Heart left ventricle (tissue), 16 donors: ENCODE measurements at regions of chr19 and their contacts with region 1.

Region 1: DNA sequence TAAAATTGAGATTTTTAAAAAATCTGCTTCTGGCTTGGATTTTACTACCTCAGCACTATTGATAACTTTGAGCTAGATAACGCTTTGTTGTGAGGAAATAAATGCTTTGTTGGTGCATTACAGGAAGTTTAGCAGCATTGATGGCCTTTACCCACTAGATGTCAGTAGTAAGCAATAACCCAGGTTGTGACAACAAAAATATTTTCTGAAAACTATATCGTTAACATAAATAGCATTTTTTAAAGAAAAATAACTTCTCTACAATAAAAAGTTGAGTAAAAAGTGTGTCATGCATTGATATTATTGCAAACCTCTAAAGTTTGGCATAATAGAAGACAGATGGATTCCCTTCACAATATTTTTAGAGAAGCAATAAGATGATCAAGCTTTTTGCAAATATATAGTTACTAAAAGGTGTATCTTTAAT is 1246.5 kb downstream of the UQCRFS1 start:
- DNase-seq: no peak
- ATAC-seq: no peak
- H3K4me3 ChIP-seq: no peak overlapping the region
- H3K27ac ChIP-seq: no peak overlapping the region
- H3K4me1 ChIP-seq: peaks cover 0 to 5% (median 0%) of the 10 kb centered on the region in 12 donors
- H3K27me3 ChIP-seq: peaks cover 0 to 7% (median 0%) of the 10 kb centered on the region in 9 donors
- CTCF ChIP-seq: peak; percentile 41 to 78 (median 53)
- POLR2A ChIP-seq: no peak

Region 2: GRCh38 chr19:28705008-28705407 is 738.6 kb after region 1 on chr19:
- intact Hi-C with region 1: loop called in 5 of 10 experiments (anchors 5 to 10 kb)
- DNase-seq: no peak
- ATAC-seq: no peak
- H3K4me3 ChIP-seq: no peak overlapping the region
- H3K27ac ChIP-seq: no peak overlapping the region
- H3K4me1 ChIP-seq: no peaks in the 10 kb centered on the region
- H3K27me3 ChIP-seq: peaks cover 0 to 5% (median 0%) of the 10 kb centered on the region in 9 donors
- CTCF ChIP-seq: no peak
- POLR2A ChIP-seq: no peak

Region 3: DNA sequence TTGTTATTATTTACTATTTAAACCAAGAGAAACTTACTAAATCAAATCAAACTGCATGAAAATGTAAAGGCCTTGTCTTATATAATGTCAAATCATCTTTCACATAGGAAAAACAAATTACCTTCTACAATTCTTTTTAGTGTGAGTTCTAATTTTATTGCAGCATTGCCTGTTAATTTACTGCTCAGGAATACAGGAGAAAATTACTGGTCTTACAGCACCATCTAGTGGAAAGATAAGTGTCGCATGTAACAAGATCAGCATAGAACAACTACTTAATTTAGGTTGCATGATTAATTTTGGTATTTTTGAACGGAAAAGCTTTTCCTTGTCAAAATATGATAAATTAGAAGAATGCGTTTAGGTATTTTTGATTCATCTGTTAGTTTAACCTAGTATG is 743.9 kb after region 1 on chr19:
- intact Hi-C with region 1: loop called in 5 of 10 experiments (anchors 5 to 10 kb)
- DNase-seq: no peak
- ATAC-seq: no peak
- H3K4me3 ChIP-seq: no peak overlapping the region
- H3K27ac ChIP-seq: no peak overlapping the region
- H3K4me1 ChIP-seq: no peaks in the 10 kb centered on the region
- H3K27me3 ChIP-seq: peaks cover 0 to 10% (median 0%) of the 10 kb centered on the region in 9 donors
- CTCF ChIP-seq: peak; percentile 43 to 77 (median 70)
- POLR2A ChIP-seq: no peak

Region 4: GRCh38 chr19:28878862-28879566 is 912.6 kb after region 1 on chr19:
- intact Hi-C with region 1: loop called in 2 of 10 experiments (anchors 5 to 10 kb)
- DNase-seq: peak; percentile 42 to 75 (median 67)
- ATAC-seq: peak in 3 of 4 donors; percentile 23 to 40 (median 23)
- H3K4me3 ChIP-seq: no peak overlapping the region
- H3K27ac ChIP-seq: no peak overlapping the region
- H3K4me1 ChIP-seq: peaks cover 0 to 15% (median 5%) of the 10 kb centered on the region in 12 donors
- H3K27me3 ChIP-seq: no peaks in the 10 kb centered on the region
- CTCF ChIP-seq: peak; percentile 53 to 84 (median 73)
- POLR2A ChIP-seq: no peak